ENCODE measurements at regions of chr7 and their contacts with region 1.

Region 1: DNA sequence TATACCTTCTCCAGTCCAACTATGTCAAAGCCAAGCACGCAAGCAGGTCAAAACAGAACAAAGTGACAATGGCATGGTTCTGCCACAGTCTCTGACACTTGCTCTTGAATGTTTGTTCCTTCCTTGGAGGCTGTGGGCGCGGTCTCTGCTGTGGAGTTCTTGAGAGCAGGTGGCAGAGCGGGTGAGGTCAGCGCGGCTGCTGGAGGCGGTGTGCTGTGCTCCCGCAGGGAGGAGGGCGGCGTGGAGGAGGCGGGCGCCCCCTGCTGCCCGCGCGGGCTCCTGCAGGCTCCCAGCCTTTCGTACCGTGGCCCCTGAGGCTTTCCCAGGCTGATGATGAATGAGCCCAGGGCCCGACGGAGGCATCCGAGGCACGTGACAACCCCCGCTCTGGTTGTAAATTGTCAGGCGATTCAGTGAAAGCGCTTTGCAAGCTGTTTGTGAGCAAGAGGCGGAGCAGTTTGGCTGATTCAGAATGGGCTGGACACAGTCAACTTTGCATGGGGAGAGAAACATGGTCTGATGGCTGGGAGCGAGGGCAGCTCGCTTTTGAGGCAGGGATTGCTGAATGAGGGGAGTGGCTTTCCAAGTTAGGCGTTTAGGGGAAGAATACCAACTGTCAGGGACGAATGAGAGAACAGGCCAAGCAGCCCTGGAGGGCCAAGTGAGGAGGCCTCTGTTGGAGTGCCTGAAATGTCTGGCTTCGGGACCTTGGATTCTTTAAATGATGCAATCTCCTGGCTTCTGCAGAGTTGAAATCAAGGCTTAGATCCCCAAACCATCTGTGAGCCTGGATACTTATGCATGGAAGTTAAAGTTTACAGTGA is 46.6 kb downstream of the CDHR3 start:
- DNase-seq: peak; percentile 91
- H3K4me3 ChIP-seq: no peak overlapping the region; a peak in 1 of 4 replicates
- H3K27ac ChIP-seq: peak overlapping the region in 1 of 2 experiments; percentile 7; a peak in 1 of 4 replicates
- H3K4me1 ChIP-seq: peaks cover 8 to 24% of the 10 kb centered on the region in 2 experiments
- H3K27me3 ChIP-seq: no peaks in the 10 kb centered on the region
- CTCF ChIP-seq: peak; percentile 99
- EP300 ChIP-seq: 0 out of 4 replicates have a peak, but pooled peaks have one; percentile 26 to 36
- RAD21 ChIP-seq: peak; percentile 83

Region 2: GRCh38 chr7:105990726-105991453 is 18.7 kb before region 1 on chr7:
- CTCF ChIA-PET with region 1: interaction called, 15 read pairs
- POLR2A ChIA-PET with region 1: no interaction called
- DNase-seq: no peak
- H3K4me3 ChIP-seq: no peak overlapping the region
- H3K27ac ChIP-seq: no peak overlapping the region
- H3K4me1 ChIP-seq: peaks cover 7 to 16% of the 10 kb centered on the region in 2 experiments
- H3K27me3 ChIP-seq: no peaks in the 10 kb centered on the region; the same call in 1 of the 2 replicates
- CTCF ChIP-seq: no peak; the same call in 1 of the 2 replicates
- EP300 ChIP-seq: no peak
- RAD21 ChIP-seq: 0 out of 2 replicates have a peak, but pooled peaks have one; percentile 1

Region 3: GRCh38 chr7:106022193-106022821 is 12.7 kb after region 1 on chr7:
- CTCF ChIA-PET with region 1: interaction called, 18 read pairs
- POLR2A ChIA-PET with region 1: no interaction called
- DNase-seq: no peak
- H3K4me3 ChIP-seq: no peak overlapping the region
- H3K27ac ChIP-seq: no peak overlapping the region
- H3K4me1 ChIP-seq: peaks cover 13 to 18% of the 10 kb centered on the region in 2 experiments; a peak in 1 of 4 replicates
- H3K27me3 ChIP-seq: no peaks in the 10 kb centered on the region
- CTCF ChIP-seq: no peak
- EP300 ChIP-seq: no peak
- RAD21 ChIP-seq: no peak

Region 4: DNA sequence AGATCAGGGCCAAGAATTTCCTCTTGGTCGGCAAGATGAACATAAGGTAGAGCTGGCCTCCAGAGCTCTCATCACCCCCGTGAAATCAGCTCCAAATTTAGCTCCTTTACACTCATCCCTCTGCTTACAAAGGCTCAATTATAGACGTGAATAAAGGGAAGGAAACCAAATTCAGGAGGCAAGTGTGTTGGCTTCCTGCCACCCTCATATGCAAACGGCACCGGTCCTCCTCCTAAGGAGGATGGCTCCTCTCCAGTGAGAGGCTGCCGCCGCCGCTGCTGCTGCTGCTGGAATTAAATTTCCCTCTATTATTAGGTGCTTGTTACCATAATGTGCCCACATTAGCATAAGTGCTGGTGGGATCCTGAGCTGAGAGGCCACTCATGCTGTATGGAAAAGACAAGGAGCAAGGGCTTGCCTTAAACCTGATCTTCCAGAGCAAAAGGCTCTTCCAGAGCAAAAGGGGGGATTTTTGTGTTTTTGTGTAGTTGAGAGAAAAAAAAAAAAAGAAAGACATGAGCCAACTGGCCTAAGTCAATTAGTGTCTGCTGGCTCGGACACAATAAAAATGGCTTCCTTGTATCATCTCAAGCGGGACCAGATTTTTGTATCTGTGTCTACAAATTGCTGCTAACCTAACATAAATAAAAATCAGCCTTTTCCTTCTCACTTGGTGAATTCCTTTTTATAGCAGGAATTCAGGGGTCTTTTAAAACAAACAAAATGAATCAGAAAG is 21.9 kb after region 1 on chr7:
- CTCF ChIA-PET with region 1: interaction called, 114 read pairs
- POLR2A ChIA-PET with region 1: no interaction called
- DNase-seq: no peak
- H3K4me3 ChIP-seq: no peak overlapping the region
- H3K27ac ChIP-seq: no peak overlapping the region; a peak in 1 of 4 replicates
- H3K4me1 ChIP-seq: peaks cover 0 to 13% of the 10 kb centered on the region in 2 experiments; a peak in 2 of 4 replicates
- H3K27me3 ChIP-seq: 0 out of 2 replicates have a peak, but pooled peaks cover 6% of the 10 kb centered on the region
- CTCF ChIP-seq: no peak
- EP300 ChIP-seq: no peak
- RAD21 ChIP-seq: no peak